Heart left ventricle (tissue), 16 donors: ENCODE measurements at regions of chr13 and their contacts with region 1.

Region 1: GRCh38 chr13:61410669-61411297 is 4.9 kb downstream of the PCDH20 start:
- DNase-seq: no peak
- ATAC-seq: no peak
- H3K4me3 ChIP-seq: no peak overlapping the region
- H3K27ac ChIP-seq: no peak overlapping the region
- H3K4me1 ChIP-seq: peaks cover 0 to 20% (median 0%) of the 10 kb centered on the region in 12 donors
- H3K27me3 ChIP-seq: peaks cover 0 to 39% (median 14%) of the 10 kb centered on the region in 9 donors
- CTCF ChIP-seq: peak in 11 of 12 donors; percentile 16 to 53 (median 42)
- POLR2A ChIP-seq: no peak

Region 2: DNA sequence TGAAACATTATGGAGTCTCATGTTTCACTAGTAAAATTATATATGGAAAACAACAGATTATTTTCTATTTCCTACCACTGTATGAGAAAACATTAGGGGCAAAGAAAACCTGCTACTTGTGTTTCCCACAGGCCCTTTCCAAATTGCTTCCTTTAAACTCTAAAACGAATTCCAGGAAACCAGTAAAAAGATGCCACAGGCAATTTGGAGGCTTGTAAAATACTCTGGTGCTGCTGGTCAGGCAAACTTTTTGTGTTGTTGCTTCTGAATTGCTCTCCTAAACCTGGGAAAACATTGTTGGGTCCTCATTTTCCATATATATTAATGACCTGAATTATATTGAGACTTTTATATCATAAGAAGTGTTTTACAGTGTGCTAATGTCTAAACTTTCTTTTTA is 872.2 kb before region 1 on chr13:
- intact Hi-C with region 1: no loop called
- DNase-seq: no peak
- ATAC-seq: no peak
- H3K4me3 ChIP-seq: no peak overlapping the region
- H3K27ac ChIP-seq: no peak overlapping the region
- H3K4me1 ChIP-seq: no peaks in the 10 kb centered on the region
- H3K27me3 ChIP-seq: no peaks in the 10 kb centered on the region
- CTCF ChIP-seq: no peak
- POLR2A ChIP-seq: no peak

Region 3: DNA sequence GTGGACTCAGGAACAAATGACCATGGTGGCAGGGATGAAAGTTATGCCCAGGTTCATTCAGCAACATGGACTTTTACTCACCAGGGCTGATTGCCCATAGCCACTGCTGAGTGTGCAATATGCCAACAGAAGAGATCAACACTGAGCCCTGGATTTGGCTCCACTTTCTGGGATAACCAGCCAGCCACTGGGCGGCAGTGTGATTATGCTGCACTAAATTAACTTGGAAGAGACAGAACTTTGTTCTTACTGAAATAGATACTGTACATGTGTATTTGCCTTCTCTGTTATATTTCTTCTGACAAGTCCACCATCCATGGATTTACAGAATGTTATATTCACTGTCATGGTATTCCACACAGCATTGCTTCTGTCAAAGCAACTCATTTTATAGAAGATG is 756.4 kb before region 1 on chr13:
- intact Hi-C with region 1: loop called in 8 of 10 experiments (anchors 5 to 10 kb)
- DNase-seq: peak in 3 of 5 donors; percentile 33 to 53 (median 37)
- ATAC-seq: peak; percentile 51 to 81 (median 75)
- H3K4me3 ChIP-seq: no peak overlapping the region
- H3K27ac ChIP-seq: no peak overlapping the region
- H3K4me1 ChIP-seq: no peaks in the 10 kb centered on the region
- H3K27me3 ChIP-seq: no peaks in the 10 kb centered on the region
- CTCF ChIP-seq: peak; percentile 29 to 63 (median 54)
- POLR2A ChIP-seq: no peak

Region 4: DNA sequence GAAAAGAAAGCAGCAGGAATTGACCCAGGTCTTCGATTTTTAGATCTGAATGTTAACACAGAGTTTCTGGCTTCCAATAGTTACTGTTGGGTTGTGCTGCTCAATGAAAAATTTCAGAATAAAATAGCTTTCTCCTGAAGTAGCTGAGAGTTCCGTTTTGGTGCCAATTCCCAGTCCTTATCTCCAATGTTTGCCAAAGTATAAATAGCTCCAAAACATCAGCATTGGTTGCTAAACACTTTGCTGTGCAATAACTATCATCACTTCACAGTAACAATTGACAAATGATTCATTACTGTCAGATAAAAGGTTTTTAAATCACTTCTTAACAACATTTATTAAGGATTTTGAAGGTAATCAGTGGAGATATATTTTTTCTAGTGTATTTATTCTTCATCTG is 441.1 kb before region 1 on chr13:
- intact Hi-C with region 1: loop called in 1 of 10 experiments (anchors 10 kb)
- DNase-seq: no peak
- ATAC-seq: peak in 3 of 4 donors; percentile 37 to 69 (median 39)
- H3K4me3 ChIP-seq: no peak overlapping the region
- H3K27ac ChIP-seq: peak overlapping the region in 1 of 12 donors; percentile 2
- H3K4me1 ChIP-seq: peaks cover 0 to 11% (median 0%) of the 10 kb centered on the region in 12 donors
- H3K27me3 ChIP-seq: no peaks in the 10 kb centered on the region
- CTCF ChIP-seq: no peak
- POLR2A ChIP-seq: no peak

Region 5: DNA sequence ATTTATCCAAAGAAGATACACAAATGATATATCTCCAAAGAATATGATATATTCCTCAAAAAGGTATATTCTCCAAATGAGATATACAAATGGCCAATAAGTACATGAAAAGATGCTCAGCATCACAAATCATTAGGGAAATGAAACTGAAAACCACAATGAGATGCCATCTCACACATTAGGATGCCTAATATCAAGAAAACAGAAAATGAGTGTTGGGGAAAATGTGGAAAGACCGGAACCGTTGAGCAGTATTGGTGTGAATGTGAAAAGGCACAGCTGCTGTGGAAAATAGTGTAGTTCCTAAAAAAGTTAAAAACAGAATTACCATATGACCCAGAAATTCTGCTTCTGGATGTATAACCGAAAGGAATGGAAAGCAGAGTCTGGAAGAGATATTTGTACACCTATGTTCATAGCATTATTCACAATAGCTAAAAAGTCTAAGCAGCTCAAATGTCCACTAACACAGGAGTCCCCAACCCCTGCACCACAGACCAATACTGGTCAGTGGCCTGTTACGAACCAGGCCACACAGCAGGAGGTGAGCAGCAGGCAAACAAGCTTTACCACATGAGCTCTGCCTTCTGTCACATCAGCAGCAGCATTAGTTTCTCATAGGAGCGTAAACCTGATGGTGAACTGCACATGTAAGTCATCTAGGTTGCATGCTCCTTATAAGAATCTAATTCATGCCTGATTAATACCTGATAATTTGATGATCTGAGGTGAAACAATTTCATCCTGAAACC is 287.1 kb before region 1 on chr13:
- intact Hi-C with region 1: loop called in 1 of 10 experiments (anchors 2 kb)
- DNase-seq: no peak
- ATAC-seq: no peak
- H3K4me3 ChIP-seq: no peak overlapping the region
- H3K27ac ChIP-seq: no peak overlapping the region
- H3K4me1 ChIP-seq: no peaks in the 10 kb centered on the region
- H3K27me3 ChIP-seq: no peaks in the 10 kb centered on the region
- CTCF ChIP-seq: no peak
- POLR2A ChIP-seq: no peak